Activated CD8-positive, alpha-beta T cell treated with anti-CD3 and anti-CD28 coated beads, Interleukin-2, amount 10 ng/mL, durations not matched to agents 7 days and 5 days (primary cell): ENCODE measurements at regions of chr17 and their contacts with region 1.

Region 1: DNA sequence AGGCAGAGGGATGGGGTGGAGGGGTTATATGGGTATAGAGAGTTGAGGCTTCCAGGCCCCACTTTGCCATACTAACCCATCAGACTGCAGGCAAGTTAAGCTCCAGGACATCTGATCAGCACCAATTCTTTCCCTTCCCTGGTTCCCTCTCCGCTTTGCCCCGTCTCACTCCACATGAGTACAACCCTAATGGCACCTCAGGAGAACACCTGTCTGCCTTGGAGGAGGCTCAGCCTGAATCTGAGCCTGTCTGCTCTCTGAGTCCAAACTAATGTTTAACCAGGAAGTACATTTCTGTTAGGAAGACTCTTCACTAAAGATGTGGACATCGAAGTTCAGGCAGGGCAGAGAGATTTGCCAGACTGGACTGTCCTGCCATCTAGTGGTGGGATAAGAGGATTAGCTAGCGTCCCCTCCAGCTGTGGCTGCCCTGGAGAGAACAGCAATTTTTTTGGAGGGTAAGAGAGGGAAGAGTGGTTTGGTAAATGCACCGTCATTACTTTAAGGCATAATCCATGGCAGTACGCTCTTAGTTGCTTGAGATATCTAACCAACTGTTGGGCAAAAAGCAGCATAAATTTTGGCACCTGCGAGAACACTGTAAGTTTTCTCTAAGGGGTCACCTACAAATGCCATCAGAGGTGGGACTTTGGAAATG is 29.2 kb upstream of the LRRC75A start:
- DNase-seq: peak; percentile 81
- ATAC-seq: peak; percentile 98
- H3K4me3 Mint-ChIP-seq: no peak overlapping the region
- H3K27ac Mint-ChIP-seq: peak overlapping the region; percentile 56
- H3K4me1 Mint-ChIP-seq: peaks cover 3% of the 10 kb centered on the region
- H3K27me3 Mint-ChIP-seq: peaks cover 22% of the 10 kb centered on the region

Region 2: DNA sequence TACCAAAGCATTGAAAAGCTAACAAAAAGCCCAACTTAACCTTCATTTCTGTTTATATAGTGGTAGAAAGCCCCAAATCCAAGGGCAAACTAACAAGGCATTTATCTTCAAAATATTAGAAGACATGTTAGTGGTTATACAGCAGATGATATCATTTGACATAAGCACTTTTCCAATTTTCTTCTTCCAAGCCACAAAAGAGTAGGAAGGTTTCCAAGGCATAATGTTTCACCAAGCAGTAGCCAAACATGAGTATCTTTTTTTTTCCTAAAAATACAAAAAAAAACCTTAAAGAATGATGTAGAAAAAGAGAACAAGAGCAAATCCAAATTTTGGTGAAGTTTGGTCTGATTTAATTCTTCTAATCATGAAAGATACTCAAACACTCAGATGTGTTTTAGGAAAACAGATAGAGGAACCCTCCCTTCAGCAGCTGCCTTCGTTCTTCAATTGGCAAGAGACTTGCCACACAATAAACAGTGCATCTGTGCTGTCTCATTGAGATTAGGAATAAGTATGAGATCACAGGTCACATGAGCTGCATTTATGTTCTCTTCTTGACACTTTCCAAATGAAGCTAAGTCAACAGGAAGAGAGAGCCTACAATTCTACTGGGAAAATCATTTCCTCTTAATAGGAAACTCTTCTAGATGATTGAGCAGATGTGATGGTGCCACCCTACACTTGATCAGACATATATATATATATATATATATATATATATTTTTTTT is 414.9 kb before region 1 on chr17:
- CTCF ChIA-PET with region 1: no interaction called
- POLR2A ChIA-PET with region 1: no interaction called
- DNase-seq: no peak
- ATAC-seq: no peak
- H3K4me3 Mint-ChIP-seq: no peak overlapping the region
- H3K27ac Mint-ChIP-seq: no peak overlapping the region
- H3K4me1 Mint-ChIP-seq: no peaks in the 10 kb centered on the region
- H3K27me3 Mint-ChIP-seq: no peaks in the 10 kb centered on the region

Region 3: GRCh38 chr17:16353317-16354174 is 167.7 kb before region 1 on chr17 and contains the start of gene CENPV:
- CTCF ChIA-PET with region 1: interaction called, 11 read pairs
- POLR2A ChIA-PET with region 1: no interaction called
- DNase-seq: peak; percentile 67
- ATAC-seq: peak; percentile 87
- H3K4me3 Mint-ChIP-seq: peak within 1 kb of the TSS; percentile 83
- H3K27ac Mint-ChIP-seq: peak within 1 kb of the TSS; percentile 79
- H3K4me1 Mint-ChIP-seq: peaks cover 25% of the 10 kb centered on the region
- H3K27me3 Mint-ChIP-seq: peaks cover 9% of the 10 kb centered on the region
- total RNA-seq, gene CENPV: 28.6 to 36.4 TPM

Region 4: GRCh38 chr17:16407911-16408588 is 113.1 kb before region 1 on chr17:
- CTCF ChIA-PET with region 1: no interaction called
- POLR2A ChIA-PET with region 1: no interaction called
- DNase-seq: no peak
- ATAC-seq: no peak
- H3K4me3 Mint-ChIP-seq: no peak overlapping the region
- H3K27ac Mint-ChIP-seq: no peak overlapping the region
- H3K4me1 Mint-ChIP-seq: peaks cover 5% of the 10 kb centered on the region
- H3K27me3 Mint-ChIP-seq: peaks cover 16% of the 10 kb centered on the region

Region 5: DNA sequence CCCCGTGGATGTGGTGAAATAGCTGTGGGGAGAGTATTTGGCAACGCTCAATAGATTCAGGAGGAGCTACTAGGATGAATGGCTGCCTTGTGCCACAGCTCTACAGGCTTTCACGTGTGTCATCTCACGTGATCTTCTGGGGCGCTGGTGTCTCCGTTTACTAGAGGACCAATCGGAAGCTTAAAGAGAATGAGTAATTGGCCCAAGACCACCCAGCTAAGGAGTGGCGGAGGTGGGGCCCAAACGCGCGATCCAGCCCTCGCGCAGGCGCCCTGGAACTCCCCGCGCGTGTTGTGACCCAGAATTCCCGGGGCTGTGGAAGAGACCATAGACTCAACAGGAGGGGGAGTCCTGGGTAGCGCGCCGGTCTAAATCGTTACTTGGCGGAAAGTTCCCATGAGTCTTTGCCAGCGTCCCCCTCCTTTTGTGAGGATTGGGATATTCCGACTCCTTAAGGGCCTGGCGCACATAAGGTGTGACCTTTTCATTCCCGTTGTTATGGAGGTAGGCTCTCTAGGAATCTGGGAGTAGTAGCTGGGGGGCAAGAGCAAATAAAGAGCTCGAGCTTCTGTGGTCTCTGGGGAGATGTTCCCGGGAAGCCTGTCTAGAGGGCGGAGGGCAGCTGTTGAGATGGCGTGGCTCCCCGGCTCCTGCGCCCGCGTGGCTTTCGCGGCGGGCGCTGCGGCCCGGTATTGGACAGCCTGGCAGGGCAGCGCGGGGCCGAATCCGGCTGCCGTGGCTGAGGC is 82.5 kb before region 1 on chr17:
- CTCF ChIA-PET with region 1: interaction called, 11 read pairs
- POLR2A ChIA-PET with region 1: no interaction called
- DNase-seq: peak; percentile 97
- ATAC-seq: peak; percentile 90
- H3K4me3 Mint-ChIP-seq: peak overlapping the region; percentile 100
- H3K27ac Mint-ChIP-seq: peak overlapping the region; percentile 99
- H3K4me1 Mint-ChIP-seq: peaks cover 49% of the 10 kb centered on the region
- H3K27me3 Mint-ChIP-seq: no peaks in the 10 kb centered on the region

Region 6: DNA sequence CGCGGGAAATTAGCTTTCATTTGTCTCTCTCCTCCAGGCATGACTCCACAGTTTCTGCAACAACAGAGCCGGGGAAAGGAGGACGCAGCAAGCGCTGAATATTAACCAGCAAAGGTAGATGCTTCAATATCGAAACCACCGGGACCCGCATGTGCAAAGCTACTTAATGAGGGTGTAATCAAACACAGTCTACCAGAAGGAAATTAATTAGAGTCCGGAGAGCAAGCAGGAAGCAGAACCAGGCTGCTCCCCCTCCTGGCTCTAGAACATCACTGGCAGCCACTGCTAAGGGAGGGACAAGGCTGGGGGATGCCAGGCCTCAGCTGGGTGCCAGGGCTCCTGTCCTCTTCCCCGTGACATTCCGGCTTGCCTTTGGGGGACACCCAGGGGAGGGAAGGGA is 50.9 kb before region 1 on chr17:
- CTCF ChIA-PET with region 1: interaction called, 12 read pairs
- POLR2A ChIA-PET with region 1: no interaction called
- DNase-seq: no peak
- ATAC-seq: no peak
- H3K4me3 Mint-ChIP-seq: no peak overlapping the region
- H3K27ac Mint-ChIP-seq: no peak overlapping the region
- H3K4me1 Mint-ChIP-seq: no peaks in the 10 kb centered on the region
- H3K27me3 Mint-ChIP-seq: no peaks in the 10 kb centered on the region

Region 7: DNA sequence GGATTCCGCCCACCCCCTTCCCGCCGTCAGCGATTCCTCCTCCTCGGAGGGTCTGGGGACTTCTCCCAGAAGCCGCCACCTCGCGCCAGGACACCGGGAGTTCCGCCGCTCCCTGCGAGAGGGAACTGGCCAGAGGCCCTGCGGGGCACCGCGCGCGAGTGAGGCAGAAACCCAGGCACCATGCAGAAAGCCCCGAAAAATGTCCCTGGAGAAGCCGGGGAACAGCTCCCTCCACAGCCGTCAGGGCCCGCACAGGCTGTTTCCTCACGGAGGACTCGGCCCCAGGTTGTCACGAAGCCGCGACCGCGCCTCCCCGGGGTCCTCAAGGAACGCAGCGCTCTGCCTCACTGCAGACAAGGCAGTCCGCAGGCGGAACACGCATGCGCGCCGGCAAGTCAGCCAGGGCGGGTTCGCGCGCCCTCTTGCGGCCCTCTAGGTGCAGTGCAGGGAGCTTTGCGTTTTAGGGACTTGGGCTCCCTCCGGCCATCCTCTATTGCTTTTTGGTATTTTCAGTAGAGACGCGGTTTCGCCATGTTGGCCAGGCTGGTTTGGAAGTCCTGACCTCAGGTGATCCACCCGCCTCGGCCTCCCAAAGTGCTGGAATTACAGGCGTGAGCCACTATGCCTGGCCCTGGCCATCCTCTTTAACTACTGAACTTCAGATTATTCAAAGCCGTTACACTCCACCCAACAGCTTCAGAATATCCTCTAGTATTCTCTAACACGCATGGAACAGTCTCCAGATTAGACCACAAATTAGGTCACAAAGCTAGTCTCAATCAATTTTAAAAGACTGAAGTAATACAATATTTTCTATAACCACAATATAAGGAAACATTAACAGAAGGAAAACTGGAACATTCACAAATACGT is 68.1 kb after region 1 on chr17:
- CTCF ChIA-PET with region 1: interaction called, 10 read pairs
- POLR2A ChIA-PET with region 1: no interaction called
- DNase-seq: peak; percentile 93
- ATAC-seq: peak; percentile 92
- H3K4me3 Mint-ChIP-seq: peak overlapping the region; percentile 69
- H3K27ac Mint-ChIP-seq: no peak overlapping the region
- H3K4me1 Mint-ChIP-seq: peaks cover 14% of the 10 kb centered on the region
- H3K27me3 Mint-ChIP-seq: peaks cover 43% of the 10 kb centered on the region